CD4-positive, alpha-beta memory T cell (primary cell): ENCODE measurements at regions of chr19 and their contacts with region 1.

Region 1: DNA sequence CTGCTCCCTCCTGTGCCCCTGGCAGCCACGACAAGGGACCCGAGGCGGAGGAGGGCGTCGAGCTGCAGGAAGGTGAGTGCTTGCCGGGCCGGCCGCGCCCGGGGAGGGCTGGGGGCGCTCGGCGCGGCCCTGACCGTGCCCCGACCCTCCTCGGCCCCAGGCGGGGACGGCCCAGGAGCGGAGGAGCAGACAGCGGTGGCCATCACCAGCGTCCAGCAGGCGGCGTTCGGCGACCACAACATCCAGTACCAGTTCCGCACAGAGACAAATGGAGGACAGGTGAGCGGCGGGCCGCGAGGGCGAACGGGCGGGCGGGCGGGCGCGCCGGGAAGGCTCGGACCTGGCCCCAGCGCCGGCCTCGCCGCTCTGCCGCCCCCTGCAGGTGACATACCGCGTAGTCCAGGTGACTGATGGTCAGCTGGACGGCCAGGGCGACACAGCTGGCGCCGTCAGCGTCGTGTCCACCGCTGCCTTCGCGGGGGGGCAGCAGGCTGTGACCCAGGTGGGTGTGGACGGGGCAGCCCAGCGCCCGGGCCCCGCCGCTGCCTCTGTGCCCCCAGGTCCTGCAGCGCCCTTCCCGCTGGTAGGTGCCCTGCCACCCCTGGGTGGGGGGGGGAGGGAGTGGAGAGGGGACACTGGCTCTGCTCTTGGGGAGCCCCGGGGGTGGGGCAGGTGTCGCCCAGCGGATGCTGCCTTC is 807 bp downstream of the USF2 start:
- DNase-seq: peak; percentile 68 to 74 (median 70)
- H3K4me3 ChIP-seq: peak overlapping the region in 1 of 2 donors; percentile 41
- H3K4me3 Mint-ChIP-seq: peak overlapping the region; percentile 65 to 83 (median 77)
- H3K27ac ChIP-seq: peak overlapping the region; percentile 41
- H3K27ac Mint-ChIP-seq: peak overlapping the region; percentile 61 to 86 (median 77)
- H3K4me1 ChIP-seq: peaks cover 37% of the 10 kb centered on the region
- H3K4me1 Mint-ChIP-seq: peaks cover 20 to 53% (median 38%) of the 10 kb centered on the region in 4 donors
- H3K27me3 ChIP-seq: no peaks in the 10 kb centered on the region
- H3K27me3 Mint-ChIP-seq: no peaks in the 10 kb centered on the region

Region 2: DNA sequence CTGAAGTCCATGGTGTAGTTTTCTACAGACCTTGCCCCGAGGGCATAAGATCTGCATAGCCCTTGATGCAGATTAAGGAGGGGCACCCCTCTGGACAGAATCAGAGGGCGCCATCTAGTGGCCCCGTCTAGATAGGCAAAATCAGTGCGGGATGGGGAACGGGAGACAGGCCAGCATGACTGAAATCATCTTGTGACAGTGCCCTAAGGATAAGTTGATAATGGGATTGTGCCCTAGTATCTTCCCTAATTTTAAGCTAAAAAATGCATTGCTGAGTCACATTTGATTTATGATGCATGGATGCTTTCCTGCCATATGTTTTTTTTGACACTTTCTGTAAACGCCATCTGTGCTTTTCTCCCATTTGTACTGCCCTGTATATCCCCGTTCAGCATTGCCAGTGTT is 923.6 kb before region 1 on chr19:
- CTCF ChIA-PET with region 1: no interaction called
- POLR2A ChIA-PET with region 1: no interaction called
- intact Hi-C with region 1: no loop called
- DNase-seq: peak; percentile 56 to 63 (median 58)
- H3K4me3 ChIP-seq: no peak overlapping the region
- H3K4me3 Mint-ChIP-seq: no peak overlapping the region
- H3K27ac ChIP-seq: no peak overlapping the region
- H3K27ac Mint-ChIP-seq: peak overlapping the region in 6 of 7 donors; percentile 49 to 92 (median 58)
- H3K4me1 ChIP-seq: peaks cover 18% of the 10 kb centered on the region
- H3K4me1 Mint-ChIP-seq: peaks cover 12 to 30% (median 20%) of the 10 kb centered on the region in 4 donors
- H3K27me3 ChIP-seq: no peaks in the 10 kb centered on the region
- H3K27me3 Mint-ChIP-seq: no peaks in the 10 kb centered on the region

Region 3: GRCh38 chr19:35114353-35115176 is 155.0 kb before region 1 on chr19:
- CTCF ChIA-PET with region 1: interaction called, 4 read pairs
- POLR2A ChIA-PET with region 1: no interaction called
- intact Hi-C with region 1: loop called (anchors 1 kb)
- DNase-seq: peak; percentile 56 to 64 (median 58)
- H3K4me3 ChIP-seq: no peak overlapping the region
- H3K4me3 Mint-ChIP-seq: peak overlapping the region in 2 of 8 donors; percentile 25 to 36
- H3K27ac ChIP-seq: no peak overlapping the region
- H3K27ac Mint-ChIP-seq: peak overlapping the region in 4 of 7 donors; percentile 30 to 77 (median 60)
- H3K4me1 ChIP-seq: peaks cover 9% of the 10 kb centered on the region
- H3K4me1 Mint-ChIP-seq: peaks cover 4 to 7% (median 5%) of the 10 kb centered on the region in 4 donors
- H3K27me3 ChIP-seq: no peaks in the 10 kb centered on the region
- H3K27me3 Mint-ChIP-seq: peaks cover 5 to 11% of the 10 kb centered on the region in 2 donors

Region 4: DNA sequence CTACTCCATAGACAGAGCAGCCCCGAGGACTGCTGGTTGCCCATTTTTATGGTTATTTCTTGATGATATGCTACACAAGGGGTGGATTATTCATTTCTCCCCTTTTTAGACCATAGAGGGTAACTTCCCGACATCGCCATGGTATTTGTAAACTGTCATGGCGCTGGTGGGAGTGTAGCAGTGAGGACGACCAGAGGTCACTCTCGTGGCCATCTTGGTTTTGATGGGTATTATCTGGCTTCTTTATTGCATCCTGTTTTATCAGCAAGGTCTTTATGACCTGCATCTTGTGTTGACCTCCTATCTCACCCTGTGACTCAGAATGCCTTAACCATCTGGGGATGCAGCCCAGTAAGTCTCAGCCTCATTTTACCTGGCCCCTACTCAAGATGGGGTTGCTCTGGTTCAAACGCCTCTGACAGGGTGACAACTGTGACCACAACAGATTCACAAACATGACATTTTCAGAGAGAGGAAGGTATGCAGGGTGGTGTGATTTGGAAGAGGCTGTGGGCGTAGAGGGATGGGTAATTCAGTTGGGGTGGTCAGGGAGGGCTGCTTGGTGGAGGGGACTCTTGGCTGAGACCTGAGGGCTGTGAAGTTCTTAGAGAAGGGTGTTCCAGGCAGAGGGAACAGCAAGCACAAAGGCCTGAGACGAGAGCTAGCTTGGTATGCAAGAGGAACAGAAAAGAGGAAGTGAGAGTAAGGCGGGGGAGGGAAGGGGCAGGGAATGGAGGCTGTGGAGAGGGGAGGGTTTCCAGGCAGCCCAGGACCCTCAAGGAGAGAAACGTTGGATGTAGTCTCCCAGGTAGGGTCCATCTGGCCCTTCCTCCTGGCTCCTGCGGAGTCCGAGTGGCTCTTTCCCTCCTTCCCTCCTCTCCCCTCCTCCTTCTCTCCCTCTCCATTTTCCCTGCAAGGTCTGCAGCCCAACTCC is 64.5 kb before region 1 on chr19:
- CTCF ChIA-PET with region 1: no interaction called
- POLR2A ChIA-PET with region 1: interaction called, 95 read pairs
- intact Hi-C with region 1: loop called (anchors 2 kb)
- DNase-seq: no peak
- H3K4me3 ChIP-seq: no peak overlapping the region
- H3K4me3 Mint-ChIP-seq: peak overlapping the region in 7 of 8 donors; percentile 47 to 85 (median 63)
- H3K27ac ChIP-seq: peak overlapping the region; percentile 75
- H3K27ac Mint-ChIP-seq: peak overlapping the region; percentile 93 to 100 (median 99)
- H3K4me1 ChIP-seq: peaks cover 74% of the 10 kb centered on the region
- H3K4me1 Mint-ChIP-seq: peaks cover 53 to 92% (median 63%) of the 10 kb centered on the region in 4 donors
- H3K27me3 ChIP-seq: no peaks in the 10 kb centered on the region
- H3K27me3 Mint-ChIP-seq: no peaks in the 10 kb centered on the region

Region 5: DNA sequence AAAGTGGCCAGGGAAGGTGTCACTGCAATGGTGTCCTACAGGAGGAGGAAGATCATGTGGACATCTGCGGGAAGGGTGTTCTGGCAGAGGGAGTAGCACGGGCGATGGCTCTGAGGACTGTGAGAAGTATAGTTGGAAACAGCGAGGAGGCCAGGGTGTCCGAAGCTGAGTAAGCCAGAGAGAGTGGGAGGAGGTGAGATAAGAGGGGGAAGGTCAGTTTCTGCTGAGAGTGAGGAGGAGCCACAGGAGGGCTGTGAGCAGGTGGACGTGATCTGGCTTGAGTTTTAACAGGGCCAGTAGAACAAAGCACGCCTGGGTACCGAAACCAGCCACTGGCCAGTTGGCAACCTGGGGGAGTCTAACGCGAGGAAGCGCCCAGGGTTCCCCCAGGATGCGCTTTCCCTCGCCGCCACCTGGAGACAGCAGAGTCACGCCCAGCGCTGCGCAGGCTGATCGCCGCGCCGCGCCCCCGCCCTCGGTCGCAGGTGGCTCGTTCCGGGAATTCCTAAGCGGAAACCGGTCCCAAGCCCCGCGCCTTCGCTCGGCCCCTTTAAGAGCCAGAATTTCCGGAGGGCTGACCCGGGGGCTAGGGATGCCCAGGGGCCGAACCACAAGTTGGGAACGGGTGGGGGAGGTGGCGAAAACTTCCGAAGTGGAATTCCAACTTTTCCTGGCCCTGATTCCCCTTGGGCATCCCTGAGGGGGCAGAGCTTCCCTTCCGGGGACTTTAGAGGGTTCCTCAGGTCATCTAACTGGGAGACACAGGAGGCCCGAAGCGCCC is 21.9 kb before region 1 on chr19:
- CTCF ChIA-PET with region 1: no interaction called
- POLR2A ChIA-PET with region 1: interaction called, 48 read pairs
- intact Hi-C with region 1: loop called (anchors 1 kb)
- DNase-seq: peak in 4 of 5 donors; percentile 48 to 53 (median 51)
- H3K4me3 ChIP-seq: peak overlapping the region; percentile 94
- H3K4me3 Mint-ChIP-seq: peak overlapping the region; percentile 91 to 94 (median 93)
- H3K27ac ChIP-seq: peak overlapping the region; percentile 61
- H3K27ac Mint-ChIP-seq: peak overlapping the region; percentile 88 to 97 (median 91)
- H3K4me1 ChIP-seq: peaks cover 24% of the 10 kb centered on the region
- H3K4me1 Mint-ChIP-seq: peaks cover 18 to 52% (median 32%) of the 10 kb centered on the region in 4 donors
- H3K27me3 ChIP-seq: no peaks in the 10 kb centered on the region
- H3K27me3 Mint-ChIP-seq: no peaks in the 10 kb centered on the region

Region 6: GRCh38 chr19:35347171-35347929 is 77.8 kb after region 1 on chr19 and contains the start of gene FFAR1:
- CTCF ChIA-PET with region 1: no interaction called
- POLR2A ChIA-PET with region 1: no interaction called
- intact Hi-C with region 1: loop called (anchors 1 kb)
- DNase-seq: peak; percentile 62 to 85 (median 64)
- H3K4me3 ChIP-seq: peak within 1 kb of the TSS in 1 of 2 donors; percentile 0
- H3K4me3 Mint-ChIP-seq: peak within 1 kb of the TSS; percentile 67 to 87 (median 76)
- H3K27ac ChIP-seq: peak within 1 kb of the TSS; percentile 8
- H3K27ac Mint-ChIP-seq: peak within 1 kb of the TSS; percentile 53 to 95 (median 91)
- H3K4me1 ChIP-seq: peaks cover 28% of the 10 kb centered on the region
- H3K4me1 Mint-ChIP-seq: peaks cover 22 to 32% (median 27%) of the 10 kb centered on the region in 4 donors
- H3K27me3 ChIP-seq: no peaks in the 10 kb centered on the region
- H3K27me3 Mint-ChIP-seq: peaks cover 2 to 5% of the 10 kb centered on the region in 2 donors
- total RNA-seq, gene FFAR1: not detected

Region 7: DNA sequence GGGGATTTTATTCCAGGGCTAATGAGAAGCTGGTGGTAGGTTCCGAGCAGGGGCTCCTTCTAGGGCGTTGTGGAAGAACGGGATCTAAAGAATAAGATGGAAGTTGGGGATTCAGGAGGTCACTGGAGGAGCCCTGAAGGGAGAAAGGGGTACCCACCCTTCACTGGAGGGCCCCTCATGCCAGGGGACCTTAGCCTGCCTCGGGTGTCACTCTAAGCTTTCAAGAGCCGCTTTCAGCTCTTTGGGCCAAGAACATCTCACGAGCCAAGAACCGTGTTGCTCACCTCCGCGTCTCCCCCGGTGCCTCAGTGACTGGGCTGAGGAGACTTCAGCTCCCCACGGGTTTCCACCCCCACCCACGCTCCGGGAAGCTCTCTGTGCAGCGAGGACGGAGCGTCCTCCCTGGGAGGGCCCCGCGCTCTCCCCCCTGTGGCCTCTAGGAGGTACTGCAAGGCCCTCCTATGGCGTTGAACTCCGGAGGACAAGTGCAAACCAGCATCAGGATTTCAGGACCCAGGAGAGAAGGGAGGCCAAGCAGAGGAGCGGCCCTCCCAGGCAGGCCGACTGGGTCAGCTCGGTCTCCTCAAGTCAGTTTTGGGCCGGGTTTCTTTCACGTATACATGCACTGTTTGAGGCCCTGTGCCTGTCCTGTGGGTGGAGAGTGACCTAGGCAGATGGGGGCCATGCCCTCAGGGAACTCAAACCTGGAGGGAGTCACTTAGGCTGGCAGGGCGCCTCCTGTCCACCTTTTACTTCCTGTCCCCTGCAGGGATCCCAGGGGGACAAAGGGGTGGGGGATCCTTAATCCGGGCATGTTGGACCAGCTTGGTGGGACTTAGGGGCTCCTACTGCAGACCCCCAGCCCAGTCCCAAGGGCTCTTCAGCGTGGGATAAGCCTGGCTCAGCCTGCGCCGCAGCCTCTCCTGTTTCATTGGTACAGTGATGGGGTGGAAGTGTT is 225.8 kb after region 1 on chr19:
- CTCF ChIA-PET with region 1: interaction called, 5 read pairs
- POLR2A ChIA-PET with region 1: no interaction called
- intact Hi-C with region 1: loop called (anchors 1 kb)
- DNase-seq: peak; percentile 59 to 70 (median 63)
- H3K4me3 ChIP-seq: no peak overlapping the region
- H3K4me3 Mint-ChIP-seq: peak overlapping the region in 3 of 8 donors; percentile 38 to 51 (median 39)
- H3K27ac ChIP-seq: no peak overlapping the region
- H3K27ac Mint-ChIP-seq: peak overlapping the region in 3 of 7 donors; percentile 30 to 48 (median 36)
- H3K4me1 ChIP-seq: peaks cover 7% of the 10 kb centered on the region
- H3K4me1 Mint-ChIP-seq: peaks cover 0 to 9% (median 6%) of the 10 kb centered on the region in 4 donors
- H3K27me3 ChIP-seq: no peaks in the 10 kb centered on the region
- H3K27me3 Mint-ChIP-seq: peaks cover 9 to 15% of the 10 kb centered on the region in 2 donors